ENCODE measurements at regions of chr7 and their contacts with region 1.

Region 1: DNA sequence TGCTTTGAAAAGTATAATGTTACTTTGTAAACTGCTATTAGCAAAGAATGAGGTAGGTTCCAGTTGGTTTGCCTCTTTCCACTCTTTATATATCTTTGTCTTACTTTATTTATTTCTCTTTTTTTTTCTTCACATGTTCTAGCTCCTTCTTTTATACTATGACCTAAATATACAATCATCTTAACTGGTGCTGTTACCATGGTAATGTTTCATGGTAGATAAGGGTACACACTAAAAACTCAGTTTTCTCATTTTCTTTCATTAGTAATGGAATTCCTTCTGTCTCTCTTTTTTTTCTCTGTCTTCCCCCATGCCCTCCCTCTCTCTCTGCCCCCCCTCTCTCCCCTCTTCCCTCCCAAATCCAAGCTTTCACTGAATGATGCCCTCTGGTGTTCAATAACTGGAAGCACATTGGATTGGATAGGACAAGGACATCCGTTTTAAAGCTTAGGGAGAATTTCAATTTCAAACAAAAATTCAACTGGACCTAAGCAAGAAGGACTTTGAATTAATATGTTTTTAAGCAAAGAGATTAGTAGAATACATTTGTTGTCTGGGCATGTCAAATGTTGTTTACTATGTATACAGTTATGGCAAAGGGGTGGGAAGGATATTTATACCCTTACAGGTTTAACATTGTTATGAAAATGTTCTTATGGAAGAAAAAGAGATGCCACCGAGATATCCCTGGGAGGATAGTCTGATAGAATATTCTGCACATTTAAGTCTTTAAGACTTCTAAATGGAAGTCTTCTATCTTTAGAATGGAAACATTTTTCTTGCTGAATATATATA is 6.0 kb downstream of the CHRM2 start:
- DNase-seq: no peak
- ATAC-seq: peak; percentile 29; the same call in 1 of the 3 replicates
- H3K4me3 ChIP-seq: no peak overlapping the region
- H3K27ac ChIP-seq: no peak overlapping the region
- H3K4me1 ChIP-seq: no peaks in the 10 kb centered on the region
- H3K27me3 ChIP-seq: peaks cover 0 to 4% of the 10 kb centered on the region in 2 experiments; a peak in 2 of 4 replicates
- CTCF ChIP-seq: peak; percentile 22 to 40 (median 28); a peak in 4 of 6 replicates
- EP300 ChIP-seq: no peak
- POLR2A ChIP-seq: no peak
- RAD21 ChIP-seq: peak; percentile 38; the same call in 1 of the 2 replicates

Region 2: GRCh38 chr7:136122011-136122410 is 752.4 kb before region 1 on chr7:
- CTCF ChIA-PET with region 1: no interaction called
- POLR2A ChIA-PET with region 1: no interaction called
- RAD21 ChIA-PET with region 1: no interaction called
- SMC1A ChIA-PET with region 1: no interaction called
- in situ Hi-C with region 1: no loop called
- intact Hi-C with region 1: loop called (anchors 10 kb)
- DNase-seq: no peak
- ATAC-seq: no peak
- H3K4me3 ChIP-seq: no peak overlapping the region
- H3K27ac ChIP-seq: no peak overlapping the region
- H3K4me1 ChIP-seq: no peaks in the 10 kb centered on the region
- H3K27me3 ChIP-seq: no peaks in the 10 kb centered on the region
- CTCF ChIP-seq: no peak
- EP300 ChIP-seq: no peak
- POLR2A ChIP-seq: no peak
- RAD21 ChIP-seq: no peak